Heart left ventricle (tissue), 16 donors: ENCODE measurements at regions of chr15 and their contacts with region 1.

Region 1: DNA sequence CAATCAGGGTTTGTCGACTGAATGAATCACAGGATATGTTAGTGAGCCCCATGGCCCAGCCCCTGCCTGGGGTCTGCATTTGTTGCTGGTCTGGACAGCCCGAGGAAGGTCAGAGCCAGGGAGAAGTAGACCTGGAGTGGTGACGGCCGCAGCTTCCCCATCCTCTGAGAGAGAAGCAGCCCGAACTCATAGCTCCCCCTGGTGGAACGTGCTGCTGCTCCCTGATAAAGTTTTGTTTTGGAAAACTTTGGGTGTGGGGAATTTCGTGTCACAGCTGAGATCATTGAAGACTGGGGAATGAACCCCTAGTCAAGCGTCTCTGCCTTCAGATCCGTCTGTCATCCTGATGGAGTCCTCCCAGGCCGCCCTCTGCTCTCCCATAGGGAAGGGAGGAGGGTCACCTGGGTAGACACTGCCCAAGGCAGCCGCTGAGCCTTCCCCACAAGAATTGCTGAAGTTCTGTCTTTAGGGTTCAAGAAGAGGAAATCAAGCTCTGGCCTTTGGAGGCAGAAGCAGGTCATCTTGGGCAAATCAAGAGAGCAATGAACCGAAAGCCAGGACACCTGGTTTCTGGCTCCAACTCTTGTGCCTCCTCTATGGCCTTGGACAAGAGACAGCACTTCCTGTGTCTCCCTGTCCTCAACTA is 60.5 kb downstream of the GLDN start:
- DNase-seq: peak; percentile 29 to 71 (median 40)
- ATAC-seq: peak; percentile 30 to 71 (median 66)
- H3K4me3 ChIP-seq: no peak overlapping the region
- H3K27ac ChIP-seq: no peak overlapping the region
- H3K4me1 ChIP-seq: peaks cover 0 to 3% (median 0%) of the 10 kb centered on the region in 12 donors
- H3K27me3 ChIP-seq: no peaks in the 10 kb centered on the region
- CTCF ChIP-seq: peak; percentile 37 to 63 (median 46)
- POLR2A ChIP-seq: no peak

Region 2: GRCh38 chr15:51162865-51163762 is 238.9 kb before region 1 on chr15:
- intact Hi-C with region 1: loop called in 4 of 10 experiments (anchors 5 kb)
- DNase-seq: peak in 4 of 5 donors; percentile 67 to 73 (median 68)
- ATAC-seq: peak; percentile 80 to 96 (median 90)
- H3K4me3 ChIP-seq: peak overlapping the region in 9 of 12 donors; percentile 13 to 38 (median 30)
- H3K27ac ChIP-seq: peak overlapping the region in 9 of 12 donors; percentile 6 to 75 (median 61)
- H3K4me1 ChIP-seq: peaks cover 0 to 20% (median 8%) of the 10 kb centered on the region in 12 donors
- H3K27me3 ChIP-seq: no peaks in the 10 kb centered on the region
- CTCF ChIP-seq: peak; percentile 89 to 99 (median 95)
- POLR2A ChIP-seq: no peak

Region 3: DNA sequence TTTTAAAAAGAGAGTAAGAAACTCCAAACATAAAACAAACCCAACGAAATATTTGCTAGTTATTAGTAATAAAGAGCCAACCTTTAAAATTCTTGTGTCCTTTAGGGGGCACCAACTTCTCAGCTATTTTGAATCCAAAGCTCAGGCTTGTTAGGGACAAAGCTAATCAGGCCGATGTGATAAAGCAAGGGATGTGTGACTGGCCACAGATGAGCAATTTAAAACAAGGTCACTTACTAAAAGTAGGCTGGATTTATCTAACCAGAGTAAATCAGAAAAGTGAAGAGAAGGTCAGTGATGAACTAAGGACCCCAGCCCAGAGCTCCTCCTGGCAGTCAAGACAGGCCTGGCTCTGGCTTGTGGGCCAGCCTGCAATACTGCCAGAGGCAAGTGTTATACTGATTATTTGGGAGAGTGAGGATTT is 172.1 kb before region 1 on chr15:
- intact Hi-C with region 1: loop called in 1 of 10 experiments (anchors 5 kb)
- DNase-seq: no peak
- ATAC-seq: peak; percentile 17 to 76 (median 52)
- H3K4me3 ChIP-seq: no peak overlapping the region
- H3K27ac ChIP-seq: peak overlapping the region in 2 of 12 donors; percentile 3 to 28
- H3K4me1 ChIP-seq: peaks cover 0 to 37% (median 7%) of the 10 kb centered on the region in 12 donors
- H3K27me3 ChIP-seq: no peaks in the 10 kb centered on the region
- CTCF ChIP-seq: peak in 7 of 12 donors; percentile 28 to 56 (median 44)
- POLR2A ChIP-seq: no peak

Region 4: GRCh38 chr15:51450001-51450400 is 48.0 kb after region 1 on chr15:
- intact Hi-C with region 1: no loop called
- DNase-seq: no peak
- ATAC-seq: peak in 1 of 4 donors; percentile 46
- H3K4me3 ChIP-seq: no peak overlapping the region
- H3K27ac ChIP-seq: no peak overlapping the region
- H3K4me1 ChIP-seq: no peaks in the 10 kb centered on the region
- H3K27me3 ChIP-seq: no peaks in the 10 kb centered on the region
- CTCF ChIP-seq: no peak
- POLR2A ChIP-seq: no peak

Region 5: DNA sequence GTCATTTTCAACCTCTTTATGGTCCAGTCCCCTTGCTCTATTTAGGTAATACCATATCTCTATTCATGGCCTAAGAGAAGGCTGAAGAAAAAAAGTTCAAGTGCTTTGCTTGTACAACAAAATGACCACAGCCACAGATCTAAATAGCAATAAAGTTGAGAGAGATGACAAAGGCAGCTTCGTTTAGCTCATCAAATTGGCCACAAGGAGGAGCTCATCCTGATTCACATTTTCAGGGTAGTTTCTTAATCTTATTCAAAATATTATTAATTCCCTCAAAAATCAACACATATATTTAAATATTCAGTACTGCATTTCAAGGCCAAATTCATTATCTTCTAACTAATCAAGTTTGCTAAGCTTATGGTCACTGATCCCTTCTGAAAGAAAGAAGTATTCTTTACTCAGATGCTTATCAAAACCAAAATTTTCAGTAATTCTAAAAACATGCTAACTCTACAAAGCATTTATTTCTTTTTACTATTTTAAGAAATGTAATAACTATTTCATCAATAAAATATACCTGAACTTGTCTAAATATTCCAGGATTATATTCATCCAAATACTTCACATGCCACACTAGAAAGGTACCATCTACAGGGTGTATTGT is 135.1 kb after region 1 on chr15:
- intact Hi-C with region 1: no loop called
- DNase-seq: no peak
- ATAC-seq: no peak
- H3K4me3 ChIP-seq: no peak overlapping the region
- H3K27ac ChIP-seq: no peak overlapping the region
- H3K4me1 ChIP-seq: no peaks in the 10 kb centered on the region
- H3K27me3 ChIP-seq: no peaks in the 10 kb centered on the region
- CTCF ChIP-seq: peak in 10 of 12 donors; percentile 6 to 51 (median 36)
- POLR2A ChIP-seq: no peak